Thyroid gland (tissue), 4 donors: ENCODE measurements at regions of chr9 and their contacts with region 1.

Region 1: GRCh38 chr9:115591584-115591984 is 473.6 kb upstream of the TNC start:
- DNase-seq: peak; percentile 57 to 62
- H3K4me3 ChIP-seq: no peak overlapping the region
- H3K27ac ChIP-seq: peak overlapping the region in 1 of 3 donors; percentile 37
- H3K4me1 ChIP-seq: no peaks in the 10 kb centered on the region
- H3K27me3 ChIP-seq: no peaks in the 10 kb centered on the region
- CTCF ChIP-seq: peak; percentile 45 to 74 (median 62)
- POLR2A ChIP-seq: no peak

Region 2: GRCh38 chr9:115657695-115658094 is 66.1 kb after region 1 on chr9:
- intact Hi-C with region 1: no loop called
- DNase-seq: no peak
- H3K4me3 ChIP-seq: no peak overlapping the region
- H3K27ac ChIP-seq: no peak overlapping the region
- H3K4me1 ChIP-seq: no peaks in the 10 kb centered on the region
- H3K27me3 ChIP-seq: no peaks in the 10 kb centered on the region
- CTCF ChIP-seq: no peak
- POLR2A ChIP-seq: no peak

Region 3: DNA sequence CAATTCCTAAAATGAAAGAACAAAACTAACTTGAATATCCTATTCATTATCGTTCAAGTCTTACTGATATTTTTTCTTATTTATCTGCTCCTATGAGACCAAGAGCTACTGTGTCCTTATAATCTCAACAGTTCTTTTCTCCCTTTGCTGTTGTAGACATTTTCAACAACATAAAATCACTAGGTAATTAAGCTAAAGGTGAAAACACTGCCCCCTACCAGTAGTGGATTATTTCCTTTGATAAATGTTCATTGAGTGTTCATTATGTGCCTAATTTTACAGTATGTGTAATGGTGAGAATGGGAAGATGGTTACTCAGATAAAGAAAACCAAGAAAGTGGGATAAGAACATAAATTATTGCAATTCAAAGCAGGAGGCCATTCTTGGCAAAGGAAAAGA is 520.7 kb after region 1 on chr9:
- intact Hi-C with region 1: loop called (anchors 10 kb)
- DNase-seq: no peak
- H3K4me3 ChIP-seq: no peak overlapping the region
- H3K27ac ChIP-seq: no peak overlapping the region
- H3K4me1 ChIP-seq: no peaks in the 10 kb centered on the region
- H3K27me3 ChIP-seq: no peaks in the 10 kb centered on the region
- CTCF ChIP-seq: peak in 2 of 6 experiments; percentile 27 to 28
- POLR2A ChIP-seq: no peak

Region 4: GRCh38 chr9:116572095-116572748 is 980.6 kb after region 1 on chr9:
- intact Hi-C with region 1: loop called (anchors 10 kb)
- DNase-seq: peak; percentile 82 to 85
- H3K4me3 ChIP-seq: no peak overlapping the region
- H3K27ac ChIP-seq: no peak overlapping the region
- H3K4me1 ChIP-seq: peaks cover 3 to 6% of the 10 kb centered on the region in 2 donors
- H3K27me3 ChIP-seq: no peaks in the 10 kb centered on the region
- CTCF ChIP-seq: peak; percentile 53 to 89 (median 85)
- POLR2A ChIP-seq: no peak

Region 5: GRCh38 chr9:116656501-116656971 is 1065.0 kb after region 1 on chr9:
- intact Hi-C with region 1: loop called (anchors 10 kb)
- DNase-seq: peak; percentile 30 to 31
- H3K4me3 ChIP-seq: no peak overlapping the region
- H3K27ac ChIP-seq: peak overlapping the region in 1 of 3 donors; percentile 24
- H3K4me1 ChIP-seq: peaks cover 4 to 5% of the 10 kb centered on the region in 2 donors
- H3K27me3 ChIP-seq: no peaks in the 10 kb centered on the region
- CTCF ChIP-seq: no peak
- POLR2A ChIP-seq: no peak